ENCODE measurements at regions of chr6 and their contacts with region 1.

Region 1: DNA sequence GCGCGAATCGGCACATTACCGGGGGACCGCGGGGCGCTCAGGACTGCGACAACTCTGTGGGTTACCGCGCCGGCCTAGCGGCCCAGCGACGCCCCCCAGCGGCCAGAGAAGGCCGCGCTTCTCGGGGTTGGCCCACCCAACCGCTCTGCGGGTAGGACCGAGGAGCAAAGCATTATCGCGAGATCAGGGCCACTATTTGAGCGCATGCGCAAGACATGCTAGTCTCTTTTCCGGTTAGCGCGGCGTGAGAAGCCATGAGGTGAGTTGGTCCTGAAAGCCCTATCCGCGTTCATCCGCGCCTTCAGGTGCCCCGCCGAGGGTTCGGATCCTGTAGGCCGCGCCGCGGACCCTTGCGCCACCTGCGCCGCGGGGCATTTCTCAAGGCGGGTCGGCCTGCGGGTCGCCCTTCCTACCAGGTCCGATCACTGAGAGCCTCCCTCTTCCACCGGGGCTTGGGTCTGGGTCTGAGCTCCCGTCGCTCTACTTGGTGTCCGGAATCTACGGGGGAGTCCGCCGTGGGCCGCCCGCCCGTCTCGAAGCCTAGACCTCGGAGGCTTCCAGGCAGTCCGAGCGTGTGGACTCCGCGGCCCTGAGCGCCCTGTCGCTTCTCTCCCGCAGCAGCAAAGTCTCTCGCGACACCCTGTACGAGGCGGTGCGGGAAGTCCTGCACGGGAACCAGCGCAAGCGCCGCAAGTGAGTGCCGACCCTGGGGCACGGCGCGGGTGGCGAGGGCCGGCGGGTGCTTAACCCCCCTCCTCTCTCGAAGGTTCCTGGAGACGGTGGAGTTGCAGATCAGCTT is at the start of gene RPL10A:
- DNase-seq: peak; percentile 95 to 97 (median 97)
- ATAC-seq: peak; percentile 86 to 92 (median 88)
- H3K4me3 ChIP-seq: peak within 1 kb of the TSS; percentile 61 to 98 (median 72)
- H3K27ac ChIP-seq: peak within 1 kb of the TSS; percentile 62 to 94 (median 88)
- H3K4me1 ChIP-seq: peaks cover 3 to 40% (median 23%) of the 10 kb centered on the region in 12 donors
- H3K27me3 ChIP-seq: no peaks in the 10 kb centered on the region
- CTCF ChIP-seq: peak; percentile 92 to 99 (median 95)
- POLR2A ChIP-seq: peak in 1 of 2 donors; percentile 92
- total RNA-seq, gene RPL10A: 472 to 700 (median 532) TPM

Region 2: DNA sequence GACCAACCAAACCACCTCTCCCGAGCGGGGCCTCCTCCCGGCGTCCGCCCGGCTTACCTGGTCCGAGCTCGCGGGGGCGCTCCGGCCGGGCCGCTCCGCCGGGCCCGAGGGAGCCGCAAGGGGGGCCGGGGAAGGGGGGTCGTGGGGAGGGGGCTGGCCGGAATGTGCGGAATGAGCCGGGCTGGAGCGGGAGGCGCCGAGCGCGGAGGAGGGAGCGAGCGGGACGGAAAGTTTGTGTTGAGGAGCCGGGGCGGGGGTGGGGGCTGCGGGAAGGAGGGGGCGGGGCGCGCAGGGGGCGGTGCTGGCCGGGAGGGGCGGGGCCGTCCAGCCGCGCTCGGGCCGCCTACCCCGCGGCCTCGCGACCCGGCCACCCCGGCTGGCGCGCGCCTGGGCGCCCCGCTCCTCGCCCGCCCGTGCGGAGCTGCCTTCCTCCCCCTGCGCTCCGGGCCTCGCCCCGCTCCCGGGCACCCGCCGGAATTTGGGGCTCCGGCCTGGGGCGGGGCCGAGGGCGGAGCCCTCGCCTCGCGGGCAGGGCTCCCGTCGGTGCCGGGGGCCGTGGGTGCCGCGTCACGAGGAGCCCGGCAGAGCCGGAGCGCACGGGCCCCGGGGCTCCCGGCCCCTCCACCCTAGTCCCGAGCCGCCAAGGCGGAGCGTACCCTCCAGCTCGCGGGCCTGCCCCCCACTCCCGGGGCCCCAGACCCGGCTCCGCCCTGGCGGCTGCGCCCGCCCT is 28.6 kb after region 1 on chr6 and contains the start of gene TEAD3:
- intact Hi-C with region 1: loop called in 1 of 10 experiments (anchors 2 kb)
- DNase-seq: peak; percentile 65 to 80 (median 70)
- ATAC-seq: peak in 3 of 4 donors; percentile 13 to 62 (median 57)
- H3K4me3 ChIP-seq: peak within 1 kb of the TSS; percentile 66 to 97 (median 84)
- H3K27ac ChIP-seq: peak within 1 kb of the TSS; percentile 88 to 100 (median 93)
- H3K4me1 ChIP-seq: peaks cover 0 to 69% (median 38%) of the 10 kb centered on the region in 12 donors
- H3K27me3 ChIP-seq: peaks cover 0 to 60% (median 0%) of the 10 kb centered on the region in 9 donors
- CTCF ChIP-seq: peak in 3 of 12 donors; percentile 15 to 21 (median 15)
- POLR2A ChIP-seq: peak in 1 of 2 donors; percentile 43
- total RNA-seq, gene TEAD3: 25.8 to 54.3 (median 37.1) TPM

Measured in heart left ventricle (tissue), 16 donors.